Activated CD4-positive, alpha-beta T cell treated with anti-CD3 and anti-CD28 coated beads, Interleukin-2, amount 10 ng/mL, durations not matched to agents 24 days and 14 days (primary cell): ENCODE measurements at regions of chr3 and their contacts with region 1.

Region 1: DNA sequence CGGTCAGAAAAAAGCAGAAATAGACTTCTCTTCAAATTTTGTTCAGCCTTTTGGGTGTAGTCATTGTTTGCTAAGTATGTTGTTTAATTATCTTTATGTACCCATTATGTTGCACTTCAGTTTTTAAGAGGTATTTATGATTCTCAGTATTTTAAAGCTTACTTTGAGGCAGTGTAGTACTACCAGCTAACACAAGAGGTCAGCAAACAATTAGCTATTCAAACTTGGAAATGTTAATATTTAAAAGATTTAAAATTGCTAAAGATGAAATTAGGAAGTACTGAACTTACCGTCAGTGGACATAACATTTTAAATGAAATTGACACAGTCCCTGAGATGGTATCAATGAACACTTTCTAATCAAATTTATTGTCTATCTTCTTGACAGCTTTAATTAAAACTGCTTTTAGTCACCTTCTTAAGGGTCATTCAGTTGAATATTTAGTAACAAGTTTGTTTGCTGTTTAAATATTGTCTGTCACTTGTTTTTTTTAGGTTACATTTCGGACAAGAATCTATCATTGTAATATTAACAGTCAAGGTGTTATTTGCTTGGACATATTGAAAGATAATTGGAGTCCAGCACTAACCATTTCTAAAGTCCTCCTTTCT is 28.1 kb downstream of the NKIRAS1 start:
- DNase-seq: peak; percentile 66
- H3K4me3 Mint-ChIP-seq: no peak overlapping the region
- H3K27ac Mint-ChIP-seq: no peak overlapping the region
- H3K4me1 Mint-ChIP-seq: no peaks in the 10 kb centered on the region
- H3K27me3 Mint-ChIP-seq: no peaks in the 10 kb centered on the region

Region 2: GRCh38 chr3:23877329-23877980 is 11.3 kb before region 1 on chr3:
- intact Hi-C with region 1: no loop called
- DNase-seq: no peak
- H3K4me3 Mint-ChIP-seq: no peak overlapping the region
- H3K27ac Mint-ChIP-seq: no peak overlapping the region
- H3K4me1 Mint-ChIP-seq: peaks cover 4% of the 10 kb centered on the region
- H3K27me3 Mint-ChIP-seq: no peaks in the 10 kb centered on the region

Region 3: GRCh38 chr3:23999012-23999641 is 110.4 kb after region 1 on chr3:
- intact Hi-C with region 1: loop called (anchors 5 kb)
- DNase-seq: peak; percentile 88
- H3K4me3 Mint-ChIP-seq: no peak overlapping the region
- H3K27ac Mint-ChIP-seq: no peak overlapping the region
- H3K4me1 Mint-ChIP-seq: peaks cover 4% of the 10 kb centered on the region
- H3K27me3 Mint-ChIP-seq: peaks cover 28% of the 10 kb centered on the region